Activated naive CD4-positive, alpha-beta T cell treated with anti-CD3 and anti-CD28 coated beads, Interleukin-2, amount 10 ng/mL, durations not matched to agents 7 days and 5 days (primary cell): ENCODE measurements at regions of chr2 and their contacts with region 1.

Region 1: GRCh38 chr2:178914259-178914849 is 107.1 kb upstream of the TTN start:
- DNase-seq: peak; percentile 82
- H3K4me3 Mint-ChIP-seq: no peak overlapping the region
- H3K27ac Mint-ChIP-seq: no peak overlapping the region
- H3K4me1 Mint-ChIP-seq: peaks cover 11% of the 10 kb centered on the region
- H3K27me3 Mint-ChIP-seq: no peaks in the 10 kb centered on the region

Region 2: DNA sequence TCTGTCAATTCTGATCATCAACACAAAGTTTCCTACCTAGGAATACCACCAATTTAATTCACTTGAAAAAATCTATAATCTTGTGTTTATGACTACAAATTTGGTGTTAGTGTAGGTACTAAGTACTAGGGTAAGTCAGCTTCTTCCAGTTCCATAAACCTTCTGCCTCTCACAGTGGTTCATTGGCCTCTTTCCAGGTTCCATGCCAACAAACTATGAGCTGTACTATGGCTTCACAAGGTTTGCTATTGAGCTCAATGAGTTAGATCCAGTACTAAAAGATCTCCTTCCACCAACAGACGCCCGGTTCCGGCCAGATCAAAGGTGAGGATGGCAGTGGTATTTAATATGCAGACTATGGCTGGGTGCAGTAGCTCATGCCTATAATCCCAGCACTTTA is 522.1 kb before region 1 on chr2:
- CTCF ChIA-PET with region 1: no interaction called
- DNase-seq: no peak
- H3K4me3 Mint-ChIP-seq: no peak overlapping the region
- H3K27ac Mint-ChIP-seq: no peak overlapping the region
- H3K4me1 Mint-ChIP-seq: peaks cover 3% of the 10 kb centered on the region
- H3K27me3 Mint-ChIP-seq: peaks cover 19% of the 10 kb centered on the region

Region 3: GRCh38 chr2:178891265-178891958 is 22.9 kb before region 1 on chr2:
- CTCF ChIA-PET with region 1: interaction called, 11 read pairs
- DNase-seq: peak; percentile 79
- H3K4me3 Mint-ChIP-seq: no peak overlapping the region
- H3K27ac Mint-ChIP-seq: no peak overlapping the region
- H3K4me1 Mint-ChIP-seq: no peaks in the 10 kb centered on the region
- H3K27me3 Mint-ChIP-seq: no peaks in the 10 kb centered on the region